Right ventricle myocardium superior (tissue), 1 donor: ENCODE measurements at regions of chr11 and their contacts with region 1.

Region 1: GRCh38 chr11:123020968-123021367 is 39.3 kb upstream of the BSX start:
- DNase-seq: no peak
- ATAC-seq: no peak

Region 2: DNA sequence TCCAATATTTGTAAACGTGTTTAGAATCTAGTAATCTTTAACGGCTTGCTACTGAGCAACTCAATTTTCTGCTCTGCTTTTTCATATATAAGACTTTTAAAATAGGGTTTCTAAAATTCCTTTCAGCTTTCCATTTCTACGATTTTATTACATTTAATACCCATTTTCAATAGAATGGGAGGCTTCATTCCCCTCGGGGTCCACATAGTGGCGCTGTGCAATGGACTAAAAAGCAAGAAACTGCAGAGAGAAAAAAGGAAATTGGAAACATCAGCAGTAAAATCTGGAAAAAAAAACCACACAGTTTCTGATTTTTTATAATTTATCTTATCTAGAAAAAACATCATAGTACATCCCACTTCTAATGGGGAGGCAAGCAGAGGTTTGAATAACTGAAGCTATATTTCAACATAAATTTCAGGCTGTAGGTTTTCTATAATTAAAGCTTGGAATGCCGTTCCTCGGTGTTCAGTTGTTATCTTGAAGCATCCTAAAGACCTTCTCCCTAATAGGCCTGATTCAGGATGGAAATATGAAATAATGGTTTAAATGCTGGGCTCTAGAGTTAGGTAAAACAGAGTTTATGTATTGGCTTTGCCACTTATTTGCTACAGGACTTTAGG is 157.2 kb before region 1 on chr11:
- intact Hi-C with region 1: loop called (anchors 2 kb)
- DNase-seq: peak; percentile 48
- ATAC-seq: peak; percentile 41

Region 3: DNA sequence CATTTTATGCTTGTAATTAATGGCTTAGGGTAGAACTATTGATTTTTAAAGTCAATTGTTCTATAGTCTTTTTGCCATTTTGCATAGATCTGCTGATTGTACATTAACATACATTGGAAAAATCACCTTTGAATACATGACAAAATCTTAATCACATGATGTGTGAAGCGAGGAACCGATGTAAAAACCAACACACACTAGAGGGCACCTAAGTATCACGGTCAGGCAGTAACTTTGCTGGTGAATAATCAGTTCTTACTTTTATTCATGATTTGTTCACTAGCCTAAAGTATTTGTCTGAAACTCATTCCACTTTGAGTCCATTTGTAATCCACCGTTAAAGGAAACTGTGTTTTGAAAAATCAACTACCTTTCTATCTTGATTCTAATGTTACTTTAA is 110.2 kb before region 1 on chr11:
- intact Hi-C with region 1: loop called (anchors 5 kb)
- DNase-seq: no peak
- ATAC-seq: no peak

Region 4: GRCh38 chr11:123103326-123103980 is 82.5 kb after region 1 on chr11:
- intact Hi-C with region 1: no loop called
- DNase-seq: peak; percentile 56
- ATAC-seq: peak; percentile 86